Psoas muscle (tissue), 8 donors: ENCODE measurements at regions of chr12 and their contacts with region 1.

Region 1: DNA sequence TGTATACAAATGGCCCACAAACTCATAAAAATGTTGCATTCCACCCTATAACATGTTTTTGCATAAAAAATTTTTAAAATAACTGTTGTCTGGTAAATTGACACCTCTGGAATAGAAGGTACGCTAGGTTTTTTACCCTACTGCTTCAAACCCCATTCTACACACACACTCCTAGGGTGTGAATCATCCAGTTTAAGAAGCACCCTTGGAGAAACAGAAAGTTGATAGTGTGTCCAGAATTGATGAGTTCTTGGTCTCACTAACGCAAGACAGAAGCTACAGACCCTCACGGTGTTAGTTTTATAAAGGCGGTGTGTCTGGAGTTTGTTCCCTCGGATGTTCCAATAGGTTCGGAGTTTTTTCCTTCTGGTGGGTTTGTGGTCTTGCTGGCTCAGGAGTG is 158.5 kb downstream of the KLRB1 start:
- DNase-seq: no peak
- ATAC-seq: no peak
- H3K4me3 ChIP-seq: no peak overlapping the region
- H3K27ac ChIP-seq: no peak overlapping the region
- H3K4me1 ChIP-seq: no peaks in the 10 kb centered on the region
- H3K27me3 ChIP-seq: no peaks in the 10 kb centered on the region
- CTCF ChIP-seq: no peak

Region 2: GRCh38 chr12:9378430-9378835 is 70.7 kb before region 1 on chr12:
- intact Hi-C with region 1: loop called in 1 of 2 experiments (anchors 5 kb)
- DNase-seq: no peak
- ATAC-seq: no peak
- H3K4me3 ChIP-seq: no peak overlapping the region
- H3K27ac ChIP-seq: no peak overlapping the region
- H3K4me1 ChIP-seq: no peaks in the 10 kb centered on the region
- H3K27me3 ChIP-seq: no peaks in the 10 kb centered on the region
- CTCF ChIP-seq: peak; percentile 13

Region 3: DNA sequence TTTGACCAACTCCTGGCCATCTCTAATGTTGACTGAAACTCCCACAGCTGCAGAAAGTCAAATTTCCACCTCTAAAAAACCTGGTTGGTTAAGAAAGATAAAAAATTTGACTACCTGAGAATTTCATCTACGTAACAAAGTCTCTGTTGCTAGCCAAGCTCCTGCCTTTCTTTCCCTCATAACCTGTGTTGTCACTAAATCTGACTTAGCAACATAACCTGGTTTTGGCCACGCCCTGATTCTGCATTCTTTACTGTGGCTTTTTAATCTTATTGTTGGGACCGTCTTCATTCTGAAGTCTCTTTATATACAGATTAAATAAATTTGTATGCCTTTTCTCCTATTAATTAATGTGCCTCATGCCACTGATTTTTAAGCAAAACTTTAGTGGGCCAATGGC is 327.6 kb after region 1 on chr12:
- intact Hi-C with region 1: no loop called
- DNase-seq: no peak
- ATAC-seq: no peak
- H3K4me3 ChIP-seq: no peak overlapping the region
- H3K27ac ChIP-seq: no peak overlapping the region
- H3K4me1 ChIP-seq: no peaks in the 10 kb centered on the region
- H3K27me3 ChIP-seq: no peaks in the 10 kb centered on the region
- CTCF ChIP-seq: no peak